Activated CD4-positive, alpha-beta memory T cell treated with anti-CD3 and anti-CD28 coated beads for 36 hours (primary cell): ENCODE measurements at regions of chr14 and their contacts with region 1.

Region 1: GRCh38 chr14:90987140-90987539 is 73.3 kb downstream of the RPS6KA5 start:
- DNase-seq: no peak
- H3K4me3 Mint-ChIP-seq: no peak overlapping the region
- H3K27ac Mint-ChIP-seq: peak overlapping the region; percentile 61
- H3K4me1 Mint-ChIP-seq: peaks cover 47% of the 10 kb centered on the region
- H3K27me3 Mint-ChIP-seq: no peaks in the 10 kb centered on the region

Region 2: DNA sequence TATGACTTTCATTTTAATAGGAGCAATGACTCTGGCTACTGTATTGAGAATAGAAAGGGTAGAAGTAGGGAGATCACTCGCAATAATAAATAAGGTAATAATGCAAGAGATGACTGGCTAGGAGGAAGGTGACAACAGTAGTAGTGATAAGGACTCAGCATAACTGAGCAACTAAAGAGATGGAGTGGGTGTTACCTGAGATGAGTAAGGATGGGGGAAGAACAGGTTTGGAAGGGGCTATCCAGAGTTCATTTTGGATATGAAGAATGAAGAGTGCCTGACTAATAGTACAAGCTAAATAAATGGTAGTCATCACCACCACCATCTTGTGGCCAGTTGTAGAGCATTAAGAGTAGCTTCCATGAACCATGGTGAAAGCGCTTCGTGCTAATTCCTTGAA is 27.8 kb before region 1 on chr14:
- CTCF ChIA-PET with region 1: no interaction called
- POLR2A ChIA-PET with region 1: no interaction called
- intact Hi-C with region 1: no loop called
- DNase-seq: no peak
- H3K4me3 Mint-ChIP-seq: no peak overlapping the region
- H3K27ac Mint-ChIP-seq: no peak overlapping the region
- H3K4me1 Mint-ChIP-seq: peaks cover 18% of the 10 kb centered on the region
- H3K27me3 Mint-ChIP-seq: no peaks in the 10 kb centered on the region

Region 3: DNA sequence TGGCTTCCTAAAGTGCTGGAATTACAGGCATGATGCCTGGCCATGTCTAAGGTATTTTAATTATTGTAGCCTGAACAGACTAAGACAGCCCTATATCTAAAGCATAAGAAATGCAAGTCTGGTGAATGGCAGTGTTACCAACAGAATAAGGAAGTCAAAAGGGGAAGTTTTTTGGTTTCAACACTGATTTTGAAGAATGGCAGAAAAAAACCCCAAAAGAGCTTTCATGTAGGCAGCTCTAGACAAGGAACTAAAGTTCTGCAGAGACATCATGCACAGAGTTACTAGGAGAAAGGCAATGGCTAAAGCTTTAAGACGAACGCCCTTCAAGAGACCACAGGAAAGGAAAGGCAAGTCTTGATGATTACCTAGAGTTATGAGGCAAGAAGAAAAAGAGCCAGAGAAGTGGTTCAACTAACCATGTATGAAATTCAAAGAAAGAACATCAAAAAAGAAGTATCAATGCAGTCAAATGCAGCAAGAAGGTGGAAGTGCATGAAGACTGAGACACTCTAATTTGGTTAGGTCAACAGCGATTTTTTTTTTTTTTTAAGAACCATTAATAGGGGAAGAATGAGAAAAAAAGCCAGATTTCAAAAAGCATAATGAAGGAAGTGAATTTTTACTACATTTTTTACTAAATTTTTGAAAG is 22.5 kb after region 1 on chr14:
- CTCF ChIA-PET with region 1: no interaction called
- POLR2A ChIA-PET with region 1: no interaction called
- intact Hi-C with region 1: loop called (anchors 2 kb)
- DNase-seq: no peak
- H3K4me3 Mint-ChIP-seq: no peak overlapping the region
- H3K27ac Mint-ChIP-seq: peak overlapping the region; percentile 2
- H3K4me1 Mint-ChIP-seq: peaks cover 42% of the 10 kb centered on the region
- H3K27me3 Mint-ChIP-seq: no peaks in the 10 kb centered on the region

Region 4: GRCh38 chr14:91038438-91038837 is 51.3 kb after region 1 on chr14:
- CTCF ChIA-PET with region 1: no interaction called
- POLR2A ChIA-PET with region 1: no interaction called
- intact Hi-C with region 1: loop called (anchors 5 kb)
- DNase-seq: peak; percentile 45
- H3K4me3 Mint-ChIP-seq: no peak overlapping the region
- H3K27ac Mint-ChIP-seq: peak overlapping the region; percentile 42
- H3K4me1 Mint-ChIP-seq: peaks cover 75% of the 10 kb centered on the region
- H3K27me3 Mint-ChIP-seq: no peaks in the 10 kb centered on the region

Region 5: DNA sequence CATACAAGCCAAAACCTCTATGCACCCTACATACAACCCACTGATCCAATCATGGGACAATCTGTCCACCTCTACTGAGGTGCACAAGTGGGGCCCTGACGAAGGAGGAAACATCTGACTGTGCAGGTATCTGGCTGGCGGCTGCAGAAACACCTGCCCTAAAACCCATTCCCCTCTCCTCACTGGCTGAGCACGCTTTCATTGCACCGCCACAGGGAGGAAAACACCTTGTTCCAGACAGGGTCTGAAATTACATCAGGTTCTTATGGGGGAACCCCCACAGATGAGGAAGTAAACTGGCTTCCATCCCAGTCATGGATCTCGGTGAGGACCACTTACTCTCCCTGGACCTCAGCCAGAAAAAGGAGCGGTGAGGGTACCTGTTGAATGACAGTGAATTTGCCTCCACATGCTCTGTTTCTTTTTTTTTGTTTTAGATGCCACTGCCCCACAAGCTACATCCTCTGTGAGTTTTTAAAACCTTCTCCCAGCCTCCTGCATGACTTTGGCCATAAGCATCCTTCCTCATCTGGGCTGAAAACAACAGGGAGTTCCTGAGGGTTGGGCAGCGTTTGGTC is 102.9 kb after region 1 on chr14:
- CTCF ChIA-PET with region 1: no interaction called
- POLR2A ChIA-PET with region 1: no interaction called
- intact Hi-C with region 1: no loop called
- DNase-seq: no peak
- H3K4me3 Mint-ChIP-seq: no peak overlapping the region
- H3K27ac Mint-ChIP-seq: no peak overlapping the region
- H3K4me1 Mint-ChIP-seq: peaks cover 11% of the 10 kb centered on the region
- H3K27me3 Mint-ChIP-seq: no peaks in the 10 kb centered on the region